ENCODE measurements at regions of chr3 and their contacts with region 1.

Region 1: DNA sequence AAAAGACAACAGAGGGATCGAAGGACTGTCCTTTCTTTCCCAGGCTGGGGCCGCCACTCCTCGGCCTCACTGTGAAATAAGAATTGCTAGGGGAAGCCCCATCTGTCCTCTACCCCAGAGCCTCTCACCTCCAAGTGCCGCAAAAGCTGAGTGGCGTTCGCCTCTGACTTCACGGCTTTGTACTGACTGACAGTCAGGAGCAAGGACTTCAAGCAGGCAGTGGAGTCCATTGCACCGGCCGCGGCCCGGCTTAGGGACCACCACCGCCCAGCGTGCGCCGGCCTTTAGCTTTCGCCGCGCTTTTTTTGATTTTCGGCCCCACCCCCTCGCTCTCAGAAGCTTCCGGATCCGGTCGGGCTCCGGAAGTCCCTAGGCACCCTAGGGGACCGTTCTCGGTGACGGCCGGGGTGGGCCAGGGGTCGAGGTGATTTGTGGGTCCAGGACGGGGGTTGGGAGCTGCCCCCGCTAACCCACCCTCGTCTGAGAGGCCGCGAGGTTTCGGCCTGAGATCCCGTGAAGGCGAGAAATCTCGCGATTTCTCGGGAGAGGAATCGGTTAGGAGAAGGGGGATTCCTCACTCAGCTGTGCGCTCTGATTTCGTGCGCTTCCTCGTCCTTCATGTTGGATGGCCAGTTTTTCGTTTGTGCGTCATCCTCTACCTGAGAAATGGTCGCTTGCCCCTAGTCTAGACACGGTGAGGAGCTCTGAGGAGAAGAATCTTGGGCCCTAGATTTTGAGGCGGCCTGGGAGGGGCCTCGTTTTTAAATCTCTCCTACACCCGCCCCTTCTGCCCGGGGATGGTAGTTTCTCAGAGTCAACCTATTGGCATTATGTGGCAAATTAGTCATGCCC is at the starts of genes CIP2A and DZIP3:
- DNase-seq: peak; percentile 92
- ATAC-seq: peak; percentile 93
- H3K4me3 Mint-ChIP-seq: peak within 1 kb of the TSS; percentile 100
- H3K27ac Mint-ChIP-seq: peak within 1 kb of the TSS; percentile 99
- H3K4me1 Mint-ChIP-seq: peaks cover 45% of the 10 kb centered on the region
- H3K27me3 Mint-ChIP-seq: no peaks in the 10 kb centered on the region
- total RNA-seq, gene CIP2A: 58.5 to 64.3 TPM
- total RNA-seq, gene DZIP3: 20.5 to 20.8 TPM

Region 2: GRCh38 chr3:108578064-108578463 is 11.3 kb before region 1 on chr3:
- CTCF ChIA-PET with region 1: interaction called, 6 read pairs
- POLR2A ChIA-PET with region 1: interaction called, 13 read pairs
- DNase-seq: no peak
- ATAC-seq: no peak
- H3K4me3 Mint-ChIP-seq: no peak overlapping the region
- H3K27ac Mint-ChIP-seq: no peak overlapping the region
- H3K4me1 Mint-ChIP-seq: peaks cover 8% of the 10 kb centered on the region
- H3K27me3 Mint-ChIP-seq: no peaks in the 10 kb centered on the region

Region 3: GRCh38 chr3:108602249-108602934 is 13.0 kb after region 1 on chr3:
- CTCF ChIA-PET with region 1: interaction called, 77 read pairs
- POLR2A ChIA-PET with region 1: interaction called, 164 read pairs
- DNase-seq: peak; percentile 66
- ATAC-seq: peak; percentile 78
- H3K4me3 Mint-ChIP-seq: peak overlapping the region; percentile 65
- H3K27ac Mint-ChIP-seq: peak overlapping the region; percentile 86
- H3K4me1 Mint-ChIP-seq: peaks cover 54% of the 10 kb centered on the region
- H3K27me3 Mint-ChIP-seq: no peaks in the 10 kb centered on the region

Region 4: DNA sequence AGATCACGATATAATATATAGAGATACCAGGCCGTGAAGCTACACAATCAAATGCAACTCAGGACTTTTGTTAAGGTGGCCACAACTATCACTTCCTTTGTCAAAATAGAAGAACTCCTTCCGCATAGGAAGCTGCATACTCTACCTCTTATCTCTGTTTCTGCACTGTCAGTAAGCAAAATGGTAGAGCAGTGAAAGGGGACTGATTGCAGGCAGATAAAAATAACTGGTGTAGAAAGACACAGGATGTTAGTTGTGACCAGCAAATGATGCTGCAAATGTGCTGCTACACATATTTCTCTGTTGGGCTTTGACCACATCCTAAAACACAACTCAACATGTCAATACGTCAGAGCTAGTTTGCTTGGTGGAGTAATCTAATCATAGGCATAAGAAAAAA is 216.9 kb after region 1 on chr3:
- CTCF ChIA-PET with region 1: no interaction called
- POLR2A ChIA-PET with region 1: no interaction called
- DNase-seq: peak; percentile 78
- ATAC-seq: peak; percentile 97
- H3K4me3 Mint-ChIP-seq: peak overlapping the region; percentile 38
- H3K27ac Mint-ChIP-seq: peak overlapping the region; percentile 90
- H3K4me1 Mint-ChIP-seq: peaks cover 32% of the 10 kb centered on the region
- H3K27me3 Mint-ChIP-seq: no peaks in the 10 kb centered on the region

Measured in activated CD8-positive, alpha-beta T cell treated with anti-CD3 and anti-CD28 coated beads, Interleukin-2, amount 10 ng/mL, durations not matched to agents 7 days and 5 days (primary cell).